ENCODE measurements at regions of chr10 and their contacts with region 1.

Region 1: GRCh38 chr10:79112881-79113431 is 44.2 kb downstream of the ZMIZ1 start:
- DNase-seq: peak; percentile 91
- H3K4me3 ChIP-seq: no peak overlapping the region
- H3K27ac ChIP-seq: peak overlapping the region; percentile 78 to 94 (median 87)
- H3K4me1 ChIP-seq: peaks cover 0 to 100% (median 87%) of the 10 kb centered on the region in 4 donors
- H3K27me3 ChIP-seq: no peaks in the 10 kb centered on the region
- CTCF ChIP-seq: no peak
- EP300 ChIP-seq: peak in 2 of 4 donors; percentile 3 to 73
- POLR2A ChIP-seq: no peak

Region 2: GRCh38 chr10:79149662-79150443 is 36.9 kb after region 1 on chr10:
- intact Hi-C with region 1: loop called (anchors 5 kb)
- DNase-seq: peak; percentile 92
- H3K4me3 ChIP-seq: no peak overlapping the region
- H3K27ac ChIP-seq: peak overlapping the region; percentile 85 to 92 (median 88)
- H3K4me1 ChIP-seq: peaks cover 0 to 100% (median 96%) of the 10 kb centered on the region in 4 donors
- H3K27me3 ChIP-seq: no peaks in the 10 kb centered on the region
- CTCF ChIP-seq: no peak
- EP300 ChIP-seq: no peak
- POLR2A ChIP-seq: no peak

Region 3: GRCh38 chr10:79195091-79195923 is 82.4 kb after region 1 on chr10:
- intact Hi-C with region 1: no loop called
- DNase-seq: peak; percentile 95
- H3K4me3 ChIP-seq: no peak overlapping the region
- H3K27ac ChIP-seq: peak overlapping the region; percentile 78 to 86 (median 80)
- H3K4me1 ChIP-seq: peaks cover 0 to 51% (median 48%) of the 10 kb centered on the region in 4 donors
- H3K27me3 ChIP-seq: no peaks in the 10 kb centered on the region
- CTCF ChIP-seq: peak; percentile 92 to 97 (median 94)
- EP300 ChIP-seq: peak in 1 of 4 donors; percentile 17
- POLR2A ChIP-seq: no peak

Measured in sigmoid colon (tissue), 7 donors.